ENCODE measurements at regions of chr12 and their contacts with region 1.

Region 1: DNA sequence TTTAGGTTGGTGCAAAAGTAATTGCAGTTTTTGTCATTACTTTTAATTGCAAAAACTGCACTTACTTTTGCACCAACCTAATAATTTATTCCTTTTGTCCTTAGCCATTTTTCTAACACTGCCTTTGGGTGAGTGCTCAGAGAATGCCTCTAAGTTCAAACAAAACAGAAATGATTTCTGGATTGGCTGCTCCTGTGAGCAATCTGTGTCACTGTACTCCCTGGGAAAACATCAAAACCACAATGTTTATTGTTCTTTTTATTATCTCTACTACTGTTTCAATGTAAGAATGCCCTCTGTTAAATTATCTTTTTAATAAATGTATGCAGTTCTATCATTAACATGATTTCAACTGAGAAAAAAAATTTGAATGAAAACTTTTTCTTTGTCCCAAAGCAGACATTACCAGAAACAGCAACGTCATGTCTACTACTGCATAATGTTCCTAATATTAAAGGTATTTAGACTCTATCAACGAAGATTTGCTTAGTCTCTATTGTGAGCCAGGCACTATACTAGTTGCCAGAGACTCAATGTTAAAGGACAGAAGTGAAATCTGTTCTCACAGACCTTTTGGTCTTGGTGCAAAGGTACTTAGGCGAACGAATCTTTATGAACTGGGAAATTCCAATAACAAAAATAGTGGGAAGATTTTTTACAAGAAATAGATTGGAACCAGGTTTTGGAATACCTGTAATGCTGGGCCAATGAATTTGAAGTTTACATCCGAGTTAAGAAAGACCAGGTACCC is 6.2 kb downstream of the SLC41A2 start:
- DNase-seq: no peak
- ATAC-seq: no peak
- H3K4me3 ChIP-seq: no peak overlapping the region
- H3K27ac ChIP-seq: no peak overlapping the region
- H3K4me1 ChIP-seq: no peaks in the 10 kb centered on the region
- H3K27me3 ChIP-seq: no peaks in the 10 kb centered on the region
- CTCF ChIP-seq: no peak
- EP300 ChIP-seq: no peak
- POLR2A ChIP-seq: no peak
- RAD21 ChIP-seq: no peak

Region 2: GRCh38 chr12:104930388-104931326 is 21.3 kb before region 1 on chr12:
- CTCF ChIA-PET with region 1: interaction called, 5 read pairs
- POLR2A ChIA-PET with region 1: no interaction called
- RAD21 ChIA-PET with region 1: interaction called, 11 read pairs
- SMC1A ChIA-PET with region 1: interaction called, 12 read pairs
- in situ Hi-C with region 1: no loop called
- intact Hi-C with region 1: no loop called
- DNase-seq: peak; percentile 90
- ATAC-seq: peak; percentile 97
- H3K4me3 ChIP-seq: peak overlapping the region; percentile 48; the same call in 1 of the 2 replicates
- H3K27ac ChIP-seq: peak overlapping the region; percentile 93
- H3K4me1 ChIP-seq: peaks cover 49% of the 10 kb centered on the region
- H3K27me3 ChIP-seq: no peaks in the 10 kb centered on the region
- CTCF ChIP-seq: no peak
- EP300 ChIP-seq: peak; percentile 65 to 97
- POLR2A ChIP-seq: no peak
- RAD21 ChIP-seq: 0 out of 2 replicates have a peak, but pooled peaks have one; percentile 3

Region 3: DNA sequence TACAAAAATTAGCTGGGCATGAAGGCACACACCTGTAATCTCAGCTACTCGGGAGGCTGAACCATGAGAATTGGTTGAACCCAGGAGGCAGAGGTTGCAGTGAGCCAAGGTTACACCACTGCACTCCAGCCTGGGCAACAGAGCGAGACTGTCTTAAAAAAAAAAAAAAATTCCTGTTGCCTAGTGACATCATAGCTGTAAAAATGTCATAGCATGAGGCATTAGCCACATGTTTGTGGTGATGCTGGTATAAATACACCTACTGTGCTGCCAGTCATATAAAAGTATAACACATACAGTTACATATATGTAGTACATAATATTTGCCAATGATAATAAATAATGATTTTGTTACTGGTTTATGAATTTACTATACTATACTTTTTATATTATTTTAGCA is 16.0 kb before region 1 on chr12:
- CTCF ChIA-PET with region 1: interaction called, 5 read pairs
- POLR2A ChIA-PET with region 1: no interaction called
- RAD21 ChIA-PET with region 1: interaction called, 11 read pairs
- SMC1A ChIA-PET with region 1: interaction called, 12 read pairs
- in situ Hi-C with region 1: no loop called
- intact Hi-C with region 1: no loop called
- DNase-seq: no peak
- ATAC-seq: peak; percentile 51
- H3K4me3 ChIP-seq: no peak overlapping the region
- H3K27ac ChIP-seq: no peak overlapping the region
- H3K4me1 ChIP-seq: peaks cover 29% of the 10 kb centered on the region
- H3K27me3 ChIP-seq: no peaks in the 10 kb centered on the region
- CTCF ChIP-seq: no peak
- EP300 ChIP-seq: no peak
- POLR2A ChIP-seq: no peak
- RAD21 ChIP-seq: no peak

Region 4: DNA sequence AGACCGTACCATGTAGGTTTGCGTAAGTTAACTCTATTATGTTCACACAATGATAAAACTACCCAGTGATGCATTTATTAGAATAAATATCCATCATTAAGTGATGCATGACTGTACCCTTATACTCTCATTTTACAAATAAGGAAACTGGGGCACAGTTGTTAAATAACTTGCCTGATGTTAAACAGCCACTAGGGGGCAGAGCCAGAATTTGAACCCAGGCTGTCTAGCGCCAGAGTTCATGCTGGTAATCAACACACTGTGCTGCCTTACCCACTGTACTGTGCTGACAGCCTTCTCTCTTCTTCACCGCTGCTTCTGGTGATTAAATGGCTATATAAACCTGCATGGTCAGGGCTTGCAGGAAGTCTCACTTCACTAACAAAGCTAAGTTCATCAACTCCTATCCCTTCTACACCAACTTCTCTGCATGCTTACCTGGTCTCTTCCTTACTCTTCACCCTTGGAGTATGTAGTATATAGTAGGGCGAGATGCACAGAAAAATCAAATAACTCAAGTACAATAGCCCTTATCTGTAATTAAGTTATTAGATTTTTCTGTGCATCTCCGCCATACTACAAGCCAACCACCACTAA is 327.6 kb after region 1 on chr12:
- CTCF ChIA-PET with region 1: no interaction called
- POLR2A ChIA-PET with region 1: no interaction called
- RAD21 ChIA-PET with region 1: no interaction called
- SMC1A ChIA-PET with region 1: no interaction called
- in situ Hi-C with region 1: no loop called
- intact Hi-C with region 1: no loop called
- DNase-seq: no peak
- ATAC-seq: peak; percentile 96
- H3K4me3 ChIP-seq: no peak overlapping the region
- H3K27ac ChIP-seq: no peak overlapping the region
- H3K4me1 ChIP-seq: no peaks in the 10 kb centered on the region
- H3K27me3 ChIP-seq: no peaks in the 10 kb centered on the region
- CTCF ChIP-seq: peak; percentile 73 to 77 (median 75); a peak in 5 of 6 replicates
- EP300 ChIP-seq: no peak
- POLR2A ChIP-seq: no peak
- RAD21 ChIP-seq: peak; percentile 72

Measured in GM12878 (cell line).